Activated CD4-positive, alpha-beta T cell treated with anti-CD3 and anti-CD28 coated beads for 36 hours (primary cell): ENCODE measurements at regions of chr15 and their contacts with region 1.

Region 1: DNA sequence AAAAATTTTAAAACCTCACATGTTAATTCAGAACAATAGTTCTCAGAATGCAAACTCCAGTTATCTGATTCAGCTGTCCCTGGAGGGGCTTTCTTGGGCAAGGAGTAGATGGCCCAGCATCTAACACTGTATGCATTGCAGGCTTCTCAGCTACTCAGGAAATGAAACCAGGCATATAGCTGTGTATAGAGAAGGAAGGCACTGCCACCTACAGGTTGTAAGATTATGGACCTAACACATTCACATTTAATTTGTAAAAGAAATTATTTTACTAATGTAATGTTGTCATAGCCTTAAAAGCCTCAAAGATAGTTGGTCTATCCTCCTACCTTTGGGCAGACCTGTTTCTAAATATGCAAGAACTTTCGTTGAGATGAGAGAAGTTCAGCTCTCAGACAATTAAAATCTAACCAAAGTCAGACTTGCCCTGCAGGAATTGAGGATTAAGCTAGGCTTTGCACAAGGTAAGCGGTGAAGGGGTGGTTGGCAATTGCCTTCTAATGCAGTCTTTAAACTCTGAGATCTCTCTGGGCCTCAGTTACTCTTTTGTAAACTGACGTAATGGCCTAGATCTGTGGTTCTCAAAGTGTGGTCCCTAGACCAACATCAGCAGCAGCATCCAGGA is 132.8 kb upstream of the SLC24A5 start:
- DNase-seq: peak; percentile 17
- ATAC-seq: peak; percentile 64
- H3K4me3 Mint-ChIP-seq: no peak overlapping the region
- H3K27ac Mint-ChIP-seq: no peak overlapping the region
- H3K4me1 Mint-ChIP-seq: no peaks in the 10 kb centered on the region
- H3K27me3 Mint-ChIP-seq: no peaks in the 10 kb centered on the region

Region 2: GRCh38 chr15:46312133-46312740 is 1675.8 kb before region 1 on chr15:
- CTCF ChIA-PET with region 1: interaction called, 3 read pairs
- POLR2A ChIA-PET with region 1: no interaction called
- intact Hi-C with region 1: loop called (anchors 1 to 5 kb)
- DNase-seq: peak; percentile 77
- ATAC-seq: peak; percentile 73
- H3K4me3 Mint-ChIP-seq: no peak overlapping the region
- H3K27ac Mint-ChIP-seq: no peak overlapping the region
- H3K4me1 Mint-ChIP-seq: no peaks in the 10 kb centered on the region
- H3K27me3 Mint-ChIP-seq: no peaks in the 10 kb centered on the region

Region 3: GRCh38 chr15:47196057-47196456 is 792.0 kb before region 1 on chr15:
- CTCF ChIA-PET with region 1: interaction called, 21 read pairs
- POLR2A ChIA-PET with region 1: no interaction called
- intact Hi-C with region 1: loop called (anchors 1 to 2 kb)
- DNase-seq: peak; percentile 75
- ATAC-seq: peak; percentile 36
- H3K4me3 Mint-ChIP-seq: no peak overlapping the region
- H3K27ac Mint-ChIP-seq: no peak overlapping the region
- H3K4me1 Mint-ChIP-seq: no peaks in the 10 kb centered on the region
- H3K27me3 Mint-ChIP-seq: peaks cover 5% of the 10 kb centered on the region

Region 4: DNA sequence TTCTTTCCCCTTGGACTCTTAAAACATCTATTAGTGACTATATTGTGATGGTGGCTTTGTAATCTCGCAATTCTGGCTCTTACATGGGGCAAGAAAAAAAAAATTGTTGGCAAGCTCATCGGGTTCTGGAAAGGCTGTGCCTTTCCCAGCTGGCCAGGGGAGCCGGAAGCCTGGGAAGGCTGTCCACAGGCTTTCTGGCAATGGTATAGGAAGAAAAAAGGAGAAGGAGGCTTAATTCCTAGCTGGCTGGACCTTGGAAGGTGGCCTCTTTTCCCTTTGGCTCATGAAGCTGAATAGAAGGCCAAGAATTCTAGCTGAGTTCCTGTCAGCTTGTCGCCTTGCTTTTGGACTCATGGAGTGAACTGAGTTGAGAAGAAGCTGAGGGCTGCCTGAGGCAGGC is 514.2 kb before region 1 on chr15:
- CTCF ChIA-PET with region 1: interaction called, 3 read pairs
- POLR2A ChIA-PET with region 1: no interaction called
- intact Hi-C with region 1: loop called (anchors 2 to 5 kb)
- DNase-seq: no peak
- ATAC-seq: no peak
- H3K4me3 Mint-ChIP-seq: no peak overlapping the region
- H3K27ac Mint-ChIP-seq: no peak overlapping the region
- H3K4me1 Mint-ChIP-seq: no peaks in the 10 kb centered on the region
- H3K27me3 Mint-ChIP-seq: peaks cover 2% of the 10 kb centered on the region

Region 5: GRCh38 chr15:47711654-47712053 is 276.4 kb before region 1 on chr15:
- CTCF ChIA-PET with region 1: interaction called, 12 read pairs
- POLR2A ChIA-PET with region 1: no interaction called
- intact Hi-C with region 1: loop called (anchors 1 to 2 kb)
- DNase-seq: no peak
- ATAC-seq: no peak
- H3K4me3 Mint-ChIP-seq: no peak overlapping the region
- H3K27ac Mint-ChIP-seq: no peak overlapping the region
- H3K4me1 Mint-ChIP-seq: no peaks in the 10 kb centered on the region
- H3K27me3 Mint-ChIP-seq: peaks cover 26% of the 10 kb centered on the region

Region 6: DNA sequence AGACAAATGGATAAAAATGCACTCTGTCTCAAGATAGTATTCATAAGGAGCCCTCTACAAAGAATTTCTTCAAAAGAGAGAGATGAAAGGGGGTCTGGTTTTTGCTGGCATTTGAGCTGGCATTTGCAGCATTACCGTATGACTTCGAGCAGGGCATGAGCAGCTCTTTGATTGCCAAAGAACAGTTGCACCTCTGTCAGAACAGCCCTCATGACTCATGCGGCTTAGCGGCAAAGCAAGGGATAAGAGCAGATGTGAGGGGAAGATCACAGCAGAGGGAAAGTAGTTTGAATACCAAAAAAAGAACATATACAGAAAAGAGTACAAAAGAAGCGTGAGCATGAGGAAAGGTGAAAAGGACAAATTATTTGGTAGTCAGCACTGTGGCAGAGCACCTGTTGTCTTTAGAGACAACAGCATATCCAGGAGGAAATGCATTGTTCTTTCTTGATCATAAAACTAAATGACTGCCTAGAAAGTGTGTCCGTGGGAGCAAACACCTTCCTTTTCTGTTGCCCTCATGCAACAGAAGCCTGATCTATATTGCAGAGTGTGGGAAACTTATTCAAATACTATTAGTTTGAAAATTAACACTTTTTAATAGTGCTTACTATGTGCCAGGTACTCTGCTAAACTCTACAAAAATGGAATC is 52.3 kb after region 1 on chr15:
- CTCF ChIA-PET with region 1: no interaction called
- POLR2A ChIA-PET with region 1: no interaction called
- intact Hi-C with region 1: no loop called
- DNase-seq: peak; percentile 38
- ATAC-seq: peak; percentile 78
- H3K4me3 Mint-ChIP-seq: no peak overlapping the region
- H3K27ac Mint-ChIP-seq: no peak overlapping the region
- H3K4me1 Mint-ChIP-seq: no peaks in the 10 kb centered on the region
- H3K27me3 Mint-ChIP-seq: peaks cover 13% of the 10 kb centered on the region